CD8-positive, alpha-beta memory T cell (primary cell): ENCODE measurements at regions of chr6 and their contacts with region 1.

Region 1: GRCh38 chr6:30483677-30484279 is 5.5 kb upstream of the HLA-E start:
- DNase-seq: peak in 2 of 5 donors; percentile 35 to 41
- H3K4me3 ChIP-seq: no peak overlapping the region
- H3K4me3 Mint-ChIP-seq: no peak overlapping the region
- H3K27ac ChIP-seq: no peak overlapping the region
- H3K27ac Mint-ChIP-seq: peak overlapping the region in 1 of 8 donors; percentile 53
- H3K4me1 ChIP-seq: peaks cover 29% of the 10 kb centered on the region
- H3K4me1 Mint-ChIP-seq: peaks cover 31 to 41% (median 34%) of the 10 kb centered on the region in 3 donors
- H3K27me3 ChIP-seq: peaks cover 21% of the 10 kb centered on the region
- H3K27me3 Mint-ChIP-seq: peaks cover 27 to 34% of the 10 kb centered on the region in 2 donors

Region 2: GRCh38 chr6:30113003-30113759 is 370.6 kb before region 1 on chr6 and contains the start of gene TRIM31:
- CTCF ChIA-PET with region 1: no interaction called
- POLR2A ChIA-PET with region 1: no interaction called
- DNase-seq: no peak
- H3K4me3 ChIP-seq: no peak within 1 kb of the TSS
- H3K4me3 Mint-ChIP-seq: no peak within 1 kb of the TSS
- H3K27ac ChIP-seq: no peak within 1 kb of the TSS
- H3K27ac Mint-ChIP-seq: peak within 1 kb of the TSS in 1 of 8 donors; percentile 64
- H3K4me1 ChIP-seq: no peaks in the 10 kb centered on the region
- H3K4me1 Mint-ChIP-seq: no peaks in the 10 kb centered on the region
- H3K27me3 ChIP-seq: no peaks in the 10 kb centered on the region
- H3K27me3 Mint-ChIP-seq: peaks cover 34 to 64% of the 10 kb centered on the region in 2 donors
- total RNA-seq, gene TRIM31: not detected

Region 3: DNA sequence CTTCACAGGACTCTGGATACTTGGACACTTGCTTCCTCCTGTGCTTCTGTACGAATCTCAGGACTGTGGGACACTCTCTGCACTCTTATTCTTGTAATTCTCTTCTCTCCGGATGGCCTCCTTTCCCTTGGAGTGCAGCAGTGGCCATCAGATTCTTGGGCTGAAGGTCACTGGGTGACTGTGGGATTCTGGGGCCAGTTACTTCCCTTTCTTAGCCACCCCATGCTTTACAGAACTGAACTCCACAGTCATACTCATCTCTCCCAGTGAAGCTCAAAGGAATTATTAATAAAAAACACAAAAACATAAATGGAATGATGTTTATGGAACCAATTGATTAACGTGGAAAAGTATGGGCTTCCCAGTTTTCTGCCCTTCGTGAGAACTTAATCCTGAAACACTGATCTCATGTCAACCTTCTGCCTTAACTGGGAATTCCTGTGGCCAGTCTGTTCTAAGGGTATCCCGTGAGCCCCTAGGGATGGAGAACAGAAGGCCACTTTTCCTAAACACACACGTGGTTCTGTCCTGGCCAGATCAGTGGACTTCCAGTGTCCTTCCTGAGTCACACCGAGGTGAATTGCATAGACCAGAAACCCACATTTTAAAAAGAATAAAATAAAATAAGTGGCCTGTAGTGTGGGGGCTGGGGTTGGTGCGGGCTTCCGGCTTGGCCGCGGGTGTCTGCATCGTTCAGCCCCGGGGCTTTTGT is 18.0 kb before region 1 on chr6:
- CTCF ChIA-PET with region 1: interaction called, 10 read pairs
- POLR2A ChIA-PET with region 1: no interaction called
- DNase-seq: no peak
- H3K4me3 ChIP-seq: peak overlapping the region; percentile 63
- H3K4me3 Mint-ChIP-seq: peak overlapping the region in 6 of 7 donors; percentile 42 to 91 (median 70)
- H3K27ac ChIP-seq: no peak overlapping the region
- H3K27ac Mint-ChIP-seq: peak overlapping the region in 1 of 8 donors; percentile 15
- H3K4me1 ChIP-seq: peaks cover 46% of the 10 kb centered on the region
- H3K4me1 Mint-ChIP-seq: peaks cover 43 to 61% (median 54%) of the 10 kb centered on the region in 3 donors
- H3K27me3 ChIP-seq: peaks cover 90% of the 10 kb centered on the region
- H3K27me3 Mint-ChIP-seq: peaks cover 66 to 82% of the 10 kb centered on the region in 2 donors

Region 4: GRCh38 chr6:30533460-30534294 is 49.9 kb after region 1 on chr6:
- CTCF ChIA-PET with region 1: interaction called, 228 read pairs
- POLR2A ChIA-PET with region 1: interaction called, 8 read pairs
- DNase-seq: peak in 1 of 5 donors; percentile 32
- H3K4me3 ChIP-seq: peak overlapping the region; percentile 6
- H3K4me3 Mint-ChIP-seq: peak overlapping the region; percentile 70 to 95 (median 93)
- H3K27ac ChIP-seq: no peak overlapping the region
- H3K27ac Mint-ChIP-seq: peak overlapping the region; percentile 74 to 98 (median 94)
- H3K4me1 ChIP-seq: peaks cover 39% of the 10 kb centered on the region
- H3K4me1 Mint-ChIP-seq: peaks cover 32 to 43% (median 42%) of the 10 kb centered on the region in 3 donors
- H3K27me3 ChIP-seq: no peaks in the 10 kb centered on the region
- H3K27me3 Mint-ChIP-seq: no peaks in the 10 kb centered on the region

Region 5: DNA sequence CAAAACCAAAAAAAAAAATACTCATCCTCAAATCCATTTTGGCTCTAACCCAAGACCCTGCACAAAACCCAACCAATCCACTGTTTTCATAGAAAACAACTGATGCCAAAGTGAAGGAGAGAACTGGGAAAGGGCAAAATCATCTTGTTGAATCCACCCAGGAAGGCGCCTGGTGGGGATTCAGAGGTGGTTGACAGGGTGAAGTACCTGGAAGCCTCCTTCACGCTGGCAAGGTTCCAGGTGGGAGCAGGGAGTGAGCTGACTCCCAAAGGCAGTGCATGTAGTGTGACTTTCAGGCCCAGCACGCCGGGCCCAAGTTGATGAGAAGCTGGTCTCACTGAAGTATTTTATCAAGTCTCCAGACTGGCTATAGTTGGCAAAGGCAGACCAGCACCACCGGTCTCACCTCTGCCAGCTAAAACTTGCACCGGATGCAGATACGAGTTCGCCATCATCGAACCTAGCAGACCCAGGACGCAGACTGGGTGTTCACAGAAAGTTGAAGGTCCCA is 116.7 kb after region 1 on chr6:
- CTCF ChIA-PET with region 1: interaction called, 83 read pairs
- POLR2A ChIA-PET with region 1: interaction called, 24 read pairs
- DNase-seq: no peak
- H3K4me3 ChIP-seq: no peak overlapping the region
- H3K4me3 Mint-ChIP-seq: no peak overlapping the region
- H3K27ac ChIP-seq: no peak overlapping the region
- H3K27ac Mint-ChIP-seq: peak overlapping the region in 5 of 8 donors; percentile 33 to 87 (median 73)
- H3K4me1 ChIP-seq: peaks cover 7% of the 10 kb centered on the region
- H3K4me1 Mint-ChIP-seq: peaks cover 22 to 28% (median 24%) of the 10 kb centered on the region in 3 donors
- H3K27me3 ChIP-seq: no peaks in the 10 kb centered on the region
- H3K27me3 Mint-ChIP-seq: peaks cover 0 to 2% of the 10 kb centered on the region in 2 donors

Region 6: GRCh38 chr6:30678964-30679726 is 195.4 kb after region 1 on chr6:
- CTCF ChIA-PET with region 1: interaction called, 10 read pairs
- POLR2A ChIA-PET with region 1: no interaction called
- DNase-seq: peak; percentile 86 to 93 (median 90)
- H3K4me3 ChIP-seq: peak overlapping the region; percentile 92
- H3K4me3 Mint-ChIP-seq: peak overlapping the region; percentile 95 to 100 (median 99)
- H3K27ac ChIP-seq: peak overlapping the region; percentile 53
- H3K27ac Mint-ChIP-seq: peak overlapping the region; percentile 80 to 100 (median 99)
- H3K4me1 ChIP-seq: peaks cover 38% of the 10 kb centered on the region
- H3K4me1 Mint-ChIP-seq: peaks cover 42 to 51% (median 44%) of the 10 kb centered on the region in 3 donors
- H3K27me3 ChIP-seq: no peaks in the 10 kb centered on the region
- H3K27me3 Mint-ChIP-seq: no peaks in the 10 kb centered on the region

Region 7: DNA sequence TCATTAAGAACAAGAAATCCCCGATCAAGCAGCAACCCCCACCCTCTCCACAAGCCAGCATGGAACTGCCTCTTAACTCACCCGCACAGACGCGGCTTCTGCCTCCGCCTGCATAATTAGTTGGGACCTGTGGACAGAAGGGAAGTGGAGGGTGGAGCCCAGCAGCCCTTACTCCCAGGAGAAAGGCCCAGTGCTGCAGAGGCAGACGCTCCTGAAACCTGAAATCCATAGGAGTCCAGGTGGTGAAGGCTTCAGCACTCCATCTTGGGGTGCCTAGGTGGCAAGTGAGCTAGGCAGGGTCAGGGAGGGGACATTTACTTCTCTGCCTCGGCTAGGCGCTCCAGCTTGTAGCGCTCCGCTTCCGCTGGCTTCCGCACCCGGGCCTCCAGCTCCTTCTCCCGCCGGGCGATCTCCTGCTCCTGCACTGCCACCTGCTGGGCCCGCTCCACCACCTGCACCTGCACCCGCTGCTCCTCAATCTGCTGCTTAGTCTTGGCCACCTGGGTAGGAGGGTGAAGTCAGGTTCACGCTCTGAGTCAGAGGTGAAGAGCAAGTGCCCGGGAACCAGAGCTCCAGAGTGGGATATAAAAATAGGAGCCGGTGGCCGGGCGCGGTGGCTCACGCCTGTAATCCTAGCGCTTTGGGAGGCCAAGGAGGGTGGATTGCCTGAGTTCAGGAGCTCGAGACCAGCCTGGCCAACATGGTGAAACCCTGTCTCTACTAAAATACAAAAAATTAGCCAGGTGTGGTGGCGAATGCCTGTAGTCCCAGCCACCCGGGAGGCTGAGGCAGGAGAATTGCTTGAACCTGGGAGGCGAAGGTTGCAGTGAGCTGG is 247.0 kb after region 1 on chr6:
- CTCF ChIA-PET with region 1: interaction called, 12 read pairs
- POLR2A ChIA-PET with region 1: interaction called, 5 read pairs
- DNase-seq: peak; percentile 71 to 86 (median 73)
- H3K4me3 ChIP-seq: no peak overlapping the region
- H3K4me3 Mint-ChIP-seq: peak overlapping the region in 4 of 7 donors; percentile 23 to 43 (median 34)
- H3K27ac ChIP-seq: no peak overlapping the region
- H3K27ac Mint-ChIP-seq: peak overlapping the region in 7 of 8 donors; percentile 47 to 86 (median 65)
- H3K4me1 ChIP-seq: peaks cover 33% of the 10 kb centered on the region
- H3K4me1 Mint-ChIP-seq: peaks cover 23 to 49% (median 32%) of the 10 kb centered on the region in 3 donors
- H3K27me3 ChIP-seq: no peaks in the 10 kb centered on the region
- H3K27me3 Mint-ChIP-seq: no peaks in the 10 kb centered on the region